Sigmoid colon (tissue), 7 donors: ENCODE measurements at regions of chr17 and their contacts with region 1.

Region 1: DNA sequence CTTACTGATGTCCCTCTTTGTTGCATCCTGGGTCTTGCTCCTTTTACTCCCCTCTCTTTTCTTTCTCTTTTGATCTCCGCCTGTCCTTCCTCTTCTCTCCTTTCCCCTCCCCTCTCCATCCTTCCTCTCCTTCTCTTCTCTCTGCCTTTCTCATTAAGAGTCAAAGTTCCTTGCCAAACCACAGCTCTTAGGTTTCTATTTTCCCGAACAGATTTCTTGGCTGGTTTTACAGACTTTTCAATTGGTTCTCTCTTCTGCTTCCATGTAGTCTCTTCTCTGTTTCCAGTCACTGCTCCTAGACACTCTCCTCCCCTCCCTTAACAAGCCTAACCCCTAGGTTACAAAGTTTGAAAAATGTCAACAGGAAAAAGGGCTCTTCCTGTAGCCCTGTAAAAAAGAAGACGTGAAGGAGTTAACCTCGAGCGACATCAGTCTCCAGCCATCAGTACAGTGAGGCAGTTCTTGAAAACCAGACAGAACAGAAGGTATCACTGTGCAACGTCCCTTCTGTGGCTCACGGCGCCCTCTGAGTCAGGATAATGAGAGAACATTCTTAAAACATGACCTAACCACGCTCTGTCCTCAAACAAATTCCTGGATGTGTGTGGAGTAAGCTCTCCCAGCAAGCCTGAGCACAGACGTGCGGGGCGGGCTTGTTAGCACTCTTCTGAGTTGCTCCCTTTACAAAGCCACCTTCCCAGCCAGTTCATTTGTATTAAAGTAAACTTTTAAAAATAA is 11.5 kb upstream of the MARCHF10 start:
- DNase-seq: peak; percentile 86
- H3K4me3 ChIP-seq: peak overlapping the region in 1 of 4 donors; percentile 4
- H3K27ac ChIP-seq: peak overlapping the region; percentile 2 to 77 (median 64)
- H3K4me1 ChIP-seq: peaks cover 0 to 16% (median 12%) of the 10 kb centered on the region in 4 donors
- H3K27me3 ChIP-seq: no peaks in the 10 kb centered on the region
- CTCF ChIP-seq: no peak
- EP300 ChIP-seq: no peak
- POLR2A ChIP-seq: no peak

Region 2: GRCh38 chr17:62860907-62861848 is 41.5 kb after region 1 on chr17:
- intact Hi-C with region 1: loop called (anchors 10 kb)
- DNase-seq: no peak
- H3K4me3 ChIP-seq: no peak overlapping the region
- H3K27ac ChIP-seq: no peak overlapping the region
- H3K4me1 ChIP-seq: no peaks in the 10 kb centered on the region
- H3K27me3 ChIP-seq: no peaks in the 10 kb centered on the region
- CTCF ChIP-seq: no peak
- EP300 ChIP-seq: no peak
- POLR2A ChIP-seq: no peak

Region 3: DNA sequence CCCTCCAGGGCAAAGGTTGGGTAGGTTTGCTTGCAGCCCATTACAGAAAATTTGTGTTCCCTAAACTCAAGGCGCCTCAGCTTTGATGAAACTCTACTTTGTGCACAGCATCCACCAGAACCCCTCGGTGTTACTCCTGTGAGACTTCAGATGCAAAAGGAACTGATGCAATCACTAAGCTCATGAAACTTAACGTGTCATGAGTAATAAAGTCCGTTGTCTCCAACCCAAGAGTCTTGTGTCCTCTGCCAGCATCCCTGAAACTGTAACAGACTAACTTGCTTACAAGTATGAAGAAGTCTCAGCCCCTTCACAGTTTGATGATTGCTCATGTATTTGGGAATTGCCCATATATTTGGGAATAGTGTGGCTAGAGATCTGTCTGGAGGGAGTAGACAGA is 63.2 kb after region 1 on chr17:
- intact Hi-C with region 1: no loop called
- DNase-seq: no peak
- H3K4me3 ChIP-seq: no peak overlapping the region
- H3K27ac ChIP-seq: no peak overlapping the region
- H3K4me1 ChIP-seq: no peaks in the 10 kb centered on the region
- H3K27me3 ChIP-seq: no peaks in the 10 kb centered on the region
- CTCF ChIP-seq: no peak
- EP300 ChIP-seq: no peak
- POLR2A ChIP-seq: no peak

Region 4: DNA sequence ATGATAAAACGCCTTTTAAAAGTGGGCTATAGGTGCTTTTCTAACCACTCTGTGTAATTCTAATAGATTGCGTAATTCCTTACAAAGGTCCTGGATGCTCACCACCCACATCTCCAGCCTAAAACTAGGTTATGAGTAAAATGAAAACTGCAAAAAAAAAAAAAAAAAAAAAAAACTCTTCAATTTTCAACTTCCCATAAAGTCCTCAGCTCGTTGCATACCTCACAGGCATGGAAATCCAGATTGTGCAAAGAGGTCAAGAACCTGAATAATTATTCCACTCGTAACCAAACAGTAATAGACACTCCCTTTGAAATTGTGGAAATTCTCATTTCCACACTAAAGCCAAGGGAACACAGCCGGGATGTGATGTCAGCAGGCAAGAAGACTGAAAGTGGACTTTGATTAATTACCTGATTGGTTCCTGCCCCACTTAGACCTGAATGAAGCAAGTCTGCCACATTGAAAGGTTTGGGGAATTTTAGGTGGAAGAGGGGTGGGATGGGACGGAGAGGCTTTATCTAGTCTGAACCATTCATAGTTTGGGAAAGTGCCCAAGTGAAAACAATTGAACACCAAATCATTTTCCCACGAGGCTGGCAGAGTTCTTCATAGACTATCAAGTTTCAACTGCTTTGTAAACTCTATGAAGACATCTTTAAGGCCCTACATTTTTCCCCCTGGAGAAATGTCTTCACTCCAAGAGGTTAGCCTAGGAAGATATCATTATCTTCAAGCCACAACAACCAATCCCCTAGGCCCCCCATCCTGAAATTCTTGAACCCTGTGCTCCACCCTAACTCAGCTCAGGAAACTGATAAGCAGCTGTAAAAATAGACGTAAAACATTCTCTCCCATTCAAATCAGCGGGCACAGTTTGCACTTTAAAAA is 97.3 kb after region 1 on chr17:
- intact Hi-C with region 1: loop called (anchors 5 kb)
- DNase-seq: no peak
- H3K4me3 ChIP-seq: no peak overlapping the region
- H3K27ac ChIP-seq: no peak overlapping the region
- H3K4me1 ChIP-seq: no peaks in the 10 kb centered on the region
- H3K27me3 ChIP-seq: no peaks in the 10 kb centered on the region
- CTCF ChIP-seq: no peak
- EP300 ChIP-seq: no peak
- POLR2A ChIP-seq: no peak